ENCODE measurements at regions of chr7 and their contacts with region 1.

Region 1: DNA sequence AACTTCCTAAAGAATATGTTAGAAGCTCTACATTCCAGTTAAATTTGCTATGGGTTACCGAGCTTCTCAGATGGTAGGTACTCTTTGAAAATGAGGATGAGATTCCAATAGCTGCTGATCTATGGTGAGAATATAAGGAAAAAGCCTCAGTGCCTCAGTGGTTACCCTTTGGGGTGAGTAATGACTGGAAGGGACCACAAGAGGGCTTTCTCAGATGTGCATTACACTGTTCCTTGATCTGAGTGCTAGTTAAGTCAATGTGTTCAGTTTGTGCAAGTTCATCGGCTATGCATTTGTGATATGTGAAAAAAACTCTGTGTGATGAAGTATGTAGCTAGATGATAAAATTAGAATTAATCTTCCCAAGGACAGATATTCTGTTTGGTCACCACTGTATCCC is 3.5 kb downstream of the NRCAM start:
- DNase-seq: peak in 1 of 2 experiments; percentile 44
- H3K4me3 ChIP-seq: no peak overlapping the region
- H3K4me3 Mint-ChIP-seq: no peak overlapping the region
- H3K27ac Mint-ChIP-seq: no peak overlapping the region
- H3K4me1 ChIP-seq: peaks cover 45% of the 10 kb centered on the region
- H3K4me1 Mint-ChIP-seq: peaks cover 20% of the 10 kb centered on the region
- H3K27me3 ChIP-seq: no peaks in the 10 kb centered on the region
- H3K27me3 Mint-ChIP-seq: no peaks in the 10 kb centered on the region
- CTCF ChIP-seq: peak; percentile 64 to 71

Region 2: GRCh38 chr7:108235451-108236061 is 217.2 kb before region 1 on chr7:
- CTCF ChIA-PET with region 1: no interaction called
- POLR2A ChIA-PET with region 1: no interaction called
- intact Hi-C with region 1: loop called (anchors 5 kb)
- DNase-seq: peak; percentile 78 to 89
- H3K4me3 ChIP-seq: no peak overlapping the region
- H3K4me3 Mint-ChIP-seq: peak overlapping the region; percentile 40
- H3K27ac Mint-ChIP-seq: peak overlapping the region; percentile 81
- H3K4me1 ChIP-seq: peaks cover 59% of the 10 kb centered on the region
- H3K4me1 Mint-ChIP-seq: peaks cover 39% of the 10 kb centered on the region
- H3K27me3 ChIP-seq: no peaks in the 10 kb centered on the region
- H3K27me3 Mint-ChIP-seq: no peaks in the 10 kb centered on the region
- CTCF ChIP-seq: no peak

Region 3: GRCh38 chr7:108246227-108246837 is 206.4 kb before region 1 on chr7:
- CTCF ChIA-PET with region 1: no interaction called
- POLR2A ChIA-PET with region 1: no interaction called
- intact Hi-C with region 1: loop called (anchors 1 kb)
- DNase-seq: peak; percentile 78 to 89
- H3K4me3 ChIP-seq: no peak overlapping the region
- H3K4me3 Mint-ChIP-seq: peak overlapping the region; percentile 43
- H3K27ac Mint-ChIP-seq: peak overlapping the region; percentile 80
- H3K4me1 ChIP-seq: peaks cover 61% of the 10 kb centered on the region
- H3K4me1 Mint-ChIP-seq: peaks cover 44% of the 10 kb centered on the region
- H3K27me3 ChIP-seq: no peaks in the 10 kb centered on the region
- H3K27me3 Mint-ChIP-seq: no peaks in the 10 kb centered on the region
- CTCF ChIP-seq: peak in 1 of 2 experiments; percentile 29

Region 4: GRCh38 chr7:108340856-108341411 is 111.8 kb before region 1 on chr7:
- CTCF ChIA-PET with region 1: no interaction called
- POLR2A ChIA-PET with region 1: no interaction called
- intact Hi-C with region 1: loop called (anchors 2 kb)
- DNase-seq: peak; percentile 93 to 97
- H3K4me3 ChIP-seq: no peak overlapping the region
- H3K4me3 Mint-ChIP-seq: peak overlapping the region; percentile 58
- H3K27ac Mint-ChIP-seq: peak overlapping the region; percentile 81
- H3K4me1 ChIP-seq: peaks cover 38% of the 10 kb centered on the region
- H3K4me1 Mint-ChIP-seq: peaks cover 40% of the 10 kb centered on the region
- H3K27me3 ChIP-seq: no peaks in the 10 kb centered on the region
- H3K27me3 Mint-ChIP-seq: no peaks in the 10 kb centered on the region
- CTCF ChIP-seq: no peak

Region 5: GRCh38 chr7:108497082-108497725 is 44.5 kb after region 1 on chr7:
- CTCF ChIA-PET with region 1: no interaction called
- POLR2A ChIA-PET with region 1: no interaction called
- intact Hi-C with region 1: loop called (anchors 1 kb)
- DNase-seq: peak in 1 of 2 experiments; percentile 70
- H3K4me3 ChIP-seq: no peak overlapping the region
- H3K4me3 Mint-ChIP-seq: no peak overlapping the region
- H3K27ac Mint-ChIP-seq: no peak overlapping the region
- H3K4me1 ChIP-seq: no peaks in the 10 kb centered on the region
- H3K4me1 Mint-ChIP-seq: no peaks in the 10 kb centered on the region
- H3K27me3 ChIP-seq: no peaks in the 10 kb centered on the region
- H3K27me3 Mint-ChIP-seq: no peaks in the 10 kb centered on the region
- CTCF ChIP-seq: peak; percentile 73 to 77

Region 6: GRCh38 chr7:108569381-108570145 is 116.8 kb after region 1 on chr7 and contains the starts of genes DNAJB9 and THAP5:
- CTCF ChIA-PET with region 1: no interaction called
- POLR2A ChIA-PET with region 1: no interaction called
- intact Hi-C with region 1: loop called (anchors 5 kb)
- DNase-seq: peak; percentile 99 to 100
- H3K4me3 ChIP-seq: peak within 1 kb of the TSS; percentile 93
- H3K4me3 Mint-ChIP-seq: peak within 1 kb of the TSS; percentile 98
- H3K27ac Mint-ChIP-seq: peak within 1 kb of the TSS; percentile 98
- H3K4me1 ChIP-seq: no peaks in the 10 kb centered on the region; the same call in 1 of the 2 replicates
- H3K4me1 Mint-ChIP-seq: no peaks in the 10 kb centered on the region
- H3K27me3 ChIP-seq: no peaks in the 10 kb centered on the region
- H3K27me3 Mint-ChIP-seq: no peaks in the 10 kb centered on the region
- CTCF ChIP-seq: no peak
- total RNA-seq, gene DNAJB9: 22.0 and 22.1 TPM in 2 replicates
- total RNA-seq, gene THAP5: 18.3 and 20.4 TPM in 2 replicates

Region 7: GRCh38 chr7:108973075-108973474 is 520.4 kb after region 1 on chr7:
- CTCF ChIA-PET with region 1: no interaction called
- POLR2A ChIA-PET with region 1: no interaction called
- intact Hi-C with region 1: no loop called
- DNase-seq: peak in 1 of 2 experiments; percentile 43
- H3K4me3 ChIP-seq: no peak overlapping the region
- H3K4me3 Mint-ChIP-seq: no peak overlapping the region
- H3K27ac Mint-ChIP-seq: no peak overlapping the region
- H3K4me1 ChIP-seq: 0 out of 2 replicates have a peak, but pooled peaks cover 4% of the 10 kb centered on the region
- H3K4me1 Mint-ChIP-seq: peaks cover 12% of the 10 kb centered on the region
- H3K27me3 ChIP-seq: no peaks in the 10 kb centered on the region; the same call in 1 of the 2 replicates
- H3K27me3 Mint-ChIP-seq: no peaks in the 10 kb centered on the region
- CTCF ChIP-seq: peak; percentile 29 to 48